Lower leg skin (tissue), 4 donors: ENCODE measurements at regions of chr3 and their contacts with region 1.

Region 1: DNA sequence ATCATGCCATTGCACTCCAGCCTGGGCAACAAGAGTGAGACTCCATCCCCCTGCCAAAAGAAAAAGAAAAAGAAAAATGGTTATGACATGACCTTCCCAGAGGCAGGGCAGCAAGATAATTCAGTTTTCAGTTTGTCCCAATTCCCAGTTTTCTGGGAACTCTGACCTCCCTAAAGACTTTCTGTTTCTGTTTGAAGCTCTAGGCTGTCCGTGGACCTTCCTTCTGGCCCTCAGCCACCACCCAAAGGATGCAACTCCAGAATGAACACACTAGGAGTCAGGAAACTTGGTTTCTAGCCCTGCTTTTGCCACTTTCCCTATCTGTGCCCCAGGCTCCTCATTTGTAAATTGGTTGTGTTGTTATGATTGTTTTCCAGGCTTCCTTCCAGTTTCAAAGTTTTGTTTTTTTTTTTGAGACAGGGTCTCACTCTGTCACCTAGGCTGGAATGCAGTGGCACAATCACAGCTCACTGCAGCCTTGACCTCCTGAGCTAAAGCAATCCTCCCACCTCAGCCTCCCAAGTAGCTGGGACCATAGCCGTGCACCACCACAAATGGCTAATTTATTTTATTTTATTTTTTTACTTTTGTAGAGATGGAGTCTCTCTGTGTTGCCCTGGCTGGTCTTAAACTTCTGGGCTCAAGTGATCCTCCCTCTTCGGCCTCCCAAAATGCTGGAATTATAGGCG is 68.6 kb downstream of the CDC25A start:
- DNase-seq: no peak
- H3K4me3 ChIP-seq: no peak overlapping the region
- CTCF ChIP-seq: no peak
- POLR2A ChIP-seq: no peak

Region 2: GRCh38 chr3:47443611-47443995 is 676.0 kb before region 1 on chr3:
- intact Hi-C with region 1: no loop called
- DNase-seq: peak in 1 of 2 donors; percentile 38
- H3K4me3 ChIP-seq: no peak overlapping the region
- CTCF ChIP-seq: no peak
- POLR2A ChIP-seq: no peak

Region 3: DNA sequence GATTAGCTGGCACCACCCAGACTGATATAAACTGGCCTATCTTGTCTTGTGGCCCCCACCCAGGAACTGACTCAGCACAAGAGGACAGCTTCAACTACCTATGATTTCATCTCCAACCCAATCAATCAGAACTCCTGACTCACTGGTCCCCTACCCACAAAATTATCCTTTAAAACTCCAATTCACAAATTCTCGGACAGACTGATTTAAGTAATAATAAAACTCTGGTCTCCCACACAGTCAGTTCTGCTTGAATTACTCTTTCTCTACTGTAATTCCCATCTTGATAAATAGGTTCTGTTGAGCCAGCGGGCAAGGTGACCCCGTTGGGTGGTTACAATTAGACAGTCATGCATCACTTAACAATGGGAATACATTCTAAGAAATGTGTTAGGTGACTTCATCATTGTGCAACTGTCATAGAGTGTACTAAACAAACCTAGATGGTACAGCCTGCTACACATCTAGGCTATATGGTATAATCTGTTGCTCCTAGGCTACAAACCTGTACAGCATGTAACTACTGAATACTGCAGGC is 55.3 kb before region 1 on chr3:
- intact Hi-C with region 1: loop called (anchors 10 kb)
- DNase-seq: no peak
- H3K4me3 ChIP-seq: no peak overlapping the region
- CTCF ChIP-seq: no peak
- POLR2A ChIP-seq: no peak

Region 4: GRCh38 chr3:48425218-48426075 is 305.8 kb after region 1 on chr3:
- intact Hi-C with region 1: no loop called
- DNase-seq: no peak
- H3K4me3 ChIP-seq: no peak overlapping the region
- CTCF ChIP-seq: no peak
- POLR2A ChIP-seq: no peak